ENCODE measurements at regions of chrX and their contacts with region 1.

Region 1: GRCh38 chrX:138775517-138775916 is 64.0 kb upstream of the FGF13 start:
- DNase-seq: no peak
- ATAC-seq: no peak

Region 2: GRCh38 chrX:138034136-138034535 is 741.4 kb before region 1 on chrX:
- intact Hi-C with region 1: no loop called
- DNase-seq: no peak
- ATAC-seq: no peak

Region 3: DNA sequence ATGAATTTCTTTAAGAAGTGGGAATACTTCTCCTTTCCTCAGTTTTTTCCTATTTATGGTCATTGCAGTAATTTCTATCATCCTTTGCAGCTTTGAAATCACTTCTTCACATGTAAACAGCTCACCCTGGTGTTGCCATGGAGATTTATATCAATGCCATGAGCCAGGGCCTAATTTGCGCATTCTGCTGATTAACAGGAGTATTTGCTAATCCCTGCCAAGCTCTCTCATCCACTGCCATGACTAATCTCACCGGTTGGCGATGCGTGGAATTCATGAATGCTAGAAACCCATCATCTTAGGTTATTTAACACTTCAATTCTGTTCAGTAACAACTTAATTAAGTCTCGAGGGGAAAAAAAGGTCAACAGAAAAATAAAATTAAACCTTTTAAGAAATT is 52.2 kb before region 1 on chrX:
- intact Hi-C with region 1: no loop called
- DNase-seq: no peak
- ATAC-seq: no peak

Region 4: DNA sequence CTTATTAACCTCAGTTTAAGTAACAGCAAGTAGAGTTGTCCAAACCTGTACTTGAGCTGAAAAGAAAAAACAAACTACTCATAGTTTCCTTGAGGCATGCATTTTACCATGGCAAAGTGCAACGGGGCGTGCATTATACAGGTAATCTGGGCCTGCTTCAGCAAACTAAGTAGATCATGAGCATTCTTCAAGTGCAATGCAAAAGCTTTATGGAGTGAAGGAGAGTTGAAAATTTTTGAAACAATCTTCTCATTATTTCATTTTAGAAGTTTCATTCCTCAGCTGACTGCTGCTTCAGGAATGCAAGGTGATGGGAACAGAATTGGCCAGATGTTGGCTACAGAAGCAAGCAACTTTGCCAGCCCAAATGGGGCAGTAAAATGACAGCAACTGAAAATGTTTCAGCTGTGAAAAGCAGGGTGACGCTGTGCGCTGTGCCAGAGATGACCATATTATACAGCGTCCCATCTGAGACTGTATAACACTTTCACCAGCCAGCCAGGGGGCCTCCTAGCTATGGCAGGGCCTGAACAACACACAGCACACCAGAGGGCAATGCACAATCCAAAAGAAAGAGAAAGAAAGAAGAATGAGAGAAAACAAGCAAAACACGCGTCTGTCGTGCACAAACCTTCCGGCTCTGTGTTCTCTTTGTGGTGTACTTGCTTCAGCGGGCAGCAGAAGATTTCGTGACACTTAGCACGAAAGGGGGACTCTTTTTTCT is 81.5 kb after region 1 on chrX:
- intact Hi-C with region 1: no loop called
- DNase-seq: no peak
- ATAC-seq: no peak

Region 5: DNA sequence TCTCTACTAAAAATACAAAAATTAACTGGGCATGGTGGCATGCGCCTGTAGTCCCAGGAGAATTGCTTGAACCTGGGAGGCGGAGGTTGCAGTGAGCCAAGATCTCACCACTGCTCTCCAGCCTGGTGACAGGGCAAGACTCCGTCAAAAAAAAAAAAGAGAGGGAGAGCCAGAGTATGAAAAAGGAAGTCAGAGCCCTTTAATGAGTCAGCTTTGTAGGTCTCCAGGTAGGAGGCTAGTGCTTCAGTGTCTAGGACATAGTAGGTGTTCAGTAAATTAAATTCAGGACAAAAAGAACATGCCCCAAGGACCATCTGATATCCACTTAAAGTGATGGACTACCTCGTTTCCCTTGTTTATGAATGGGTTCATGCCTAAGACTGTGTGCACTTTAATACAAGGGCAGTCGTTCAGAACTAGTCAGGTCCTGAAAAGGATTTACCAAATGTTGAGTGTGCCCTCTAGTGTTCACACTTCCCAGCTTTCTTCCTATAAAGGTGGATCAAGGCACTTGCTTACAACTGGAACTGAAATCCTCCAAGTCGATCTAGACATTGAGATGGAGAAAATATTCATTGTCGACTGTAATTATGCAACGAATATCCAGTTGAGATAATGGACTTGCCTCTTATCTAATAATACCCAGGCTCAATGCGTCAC is 784.0 kb after region 1 on chrX:
- intact Hi-C with region 1: loop called (anchors 5 kb)
- DNase-seq: no peak
- ATAC-seq: peak; percentile 45

Measured in Right ventricle myocardium superior (tissue), 1 donor.